MCF 10A (cell line): ENCODE measurements at regions of chr20 and their contacts with region 1.

Region 1: DNA sequence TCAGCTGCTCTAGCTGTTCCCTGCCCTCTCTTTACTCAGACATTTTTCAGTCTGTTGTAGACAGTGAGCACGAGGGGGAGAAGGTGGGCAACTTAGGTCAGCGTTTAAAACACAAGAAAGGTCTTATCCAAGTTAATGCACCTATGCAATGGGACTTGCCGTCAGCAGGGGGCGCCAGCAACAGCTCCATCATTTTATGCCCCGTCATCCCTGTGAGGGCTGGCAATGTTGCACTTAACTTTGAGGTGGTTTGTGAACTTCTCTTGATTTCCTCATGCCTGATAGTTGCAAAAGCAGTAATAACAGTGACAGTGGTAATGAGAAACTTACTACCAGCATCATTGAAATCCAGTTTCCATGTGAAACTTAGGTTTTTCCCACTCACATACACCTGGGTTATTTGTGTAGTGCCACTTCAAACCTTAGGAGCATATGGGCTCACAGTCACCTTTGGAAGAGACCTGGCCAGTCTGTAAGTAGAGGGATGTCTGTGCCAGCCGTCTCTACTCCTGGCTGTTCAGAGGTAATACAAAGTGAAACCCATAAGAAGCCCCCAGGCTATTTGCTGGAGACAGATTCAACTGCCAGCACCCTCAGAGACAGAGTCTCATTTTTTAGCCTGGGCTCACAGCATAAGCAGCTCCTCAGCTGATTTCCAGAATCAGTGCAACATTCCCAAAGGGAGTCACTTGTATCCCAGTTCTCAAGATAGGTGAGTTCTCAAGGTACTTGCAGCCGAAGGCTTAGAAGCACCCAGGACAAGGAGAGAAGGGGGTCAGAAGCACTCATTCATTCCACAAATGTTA is 44.8 kb upstream of the ID1 start:
- DNase-seq: peak; percentile 87
- H3K4me3 Mint-ChIP-seq: peak overlapping the region; percentile 45
- H3K27ac Mint-ChIP-seq: peak overlapping the region; percentile 85
- H3K4me1 Mint-ChIP-seq: peaks cover 30% of the 10 kb centered on the region
- H3K27me3 Mint-ChIP-seq: no peaks in the 10 kb centered on the region
- CTCF ChIP-seq: peak; percentile 94

Region 2: GRCh38 chr20:31537890-31538289 is 22.4 kb before region 1 on chr20:
- CTCF ChIA-PET with region 1: interaction called, 278 read pairs
- POLR2A ChIA-PET with region 1: interaction called, 3 read pairs
- intact Hi-C with region 1: no loop called
- DNase-seq: no peak
- H3K4me3 Mint-ChIP-seq: no peak overlapping the region
- H3K27ac Mint-ChIP-seq: no peak overlapping the region
- H3K4me1 Mint-ChIP-seq: peaks cover 8% of the 10 kb centered on the region
- H3K27me3 Mint-ChIP-seq: no peaks in the 10 kb centered on the region
- CTCF ChIP-seq: no peak

Region 3: GRCh38 chr20:31572701-31573554 is 12.6 kb after region 1 on chr20:
- CTCF ChIA-PET with region 1: interaction called, 220 read pairs
- POLR2A ChIA-PET with region 1: interaction called, 34 read pairs
- intact Hi-C with region 1: no loop called
- DNase-seq: peak; percentile 99
- H3K4me3 Mint-ChIP-seq: peak overlapping the region; percentile 87
- H3K27ac Mint-ChIP-seq: peak overlapping the region; percentile 96
- H3K4me1 Mint-ChIP-seq: peaks cover 27% of the 10 kb centered on the region
- H3K27me3 Mint-ChIP-seq: no peaks in the 10 kb centered on the region
- CTCF ChIP-seq: no peak

Region 4: DNA sequence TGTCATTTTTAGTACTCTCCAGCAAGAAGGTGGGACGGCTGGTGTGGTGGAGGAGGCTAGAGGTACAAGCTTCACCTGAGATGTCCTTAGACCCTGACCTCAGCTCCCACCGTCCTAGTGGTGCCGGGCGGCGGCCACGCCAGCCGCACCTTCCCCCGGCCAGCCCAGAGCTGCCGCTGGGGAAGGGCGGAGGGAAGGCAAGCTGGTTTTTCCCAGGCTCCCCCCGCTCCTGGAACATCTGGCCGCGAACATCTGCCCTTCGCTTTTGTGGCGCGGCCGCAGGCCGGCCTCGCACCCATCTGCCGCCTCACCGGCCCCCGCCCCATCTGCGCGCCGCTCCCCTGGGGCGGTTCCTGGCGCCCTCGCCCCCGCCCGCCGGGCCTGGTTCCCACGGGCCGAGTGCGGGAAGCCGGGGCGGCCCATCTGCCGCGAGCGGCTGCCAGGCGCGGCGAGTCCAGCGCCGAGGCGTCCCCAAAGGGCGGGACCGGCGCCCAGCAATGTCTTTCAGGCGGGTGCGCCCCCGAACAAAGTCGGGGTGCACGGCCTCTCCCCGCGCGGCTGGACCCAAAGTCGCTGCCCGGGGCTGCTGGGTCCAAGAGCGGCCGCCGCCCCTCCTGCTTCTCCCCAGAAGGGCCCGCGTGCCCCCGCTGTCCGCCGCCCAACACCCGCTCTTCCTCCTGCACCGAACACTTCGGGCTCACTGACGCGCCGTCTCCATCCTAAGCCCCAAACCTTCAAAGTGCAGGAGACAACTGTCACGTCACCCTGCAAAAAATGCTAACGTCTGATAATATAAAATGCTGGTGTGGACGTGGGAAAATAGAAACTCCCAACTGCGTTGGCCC is 27.5 kb after region 1 on chr20:
- CTCF ChIA-PET with region 1: interaction called, 44 read pairs
- POLR2A ChIA-PET with region 1: interaction called, 39 read pairs
- intact Hi-C with region 1: no loop called
- DNase-seq: no peak
- H3K4me3 Mint-ChIP-seq: peak overlapping the region; percentile 55
- H3K27ac Mint-ChIP-seq: no peak overlapping the region
- H3K4me1 Mint-ChIP-seq: peaks cover 6% of the 10 kb centered on the region
- H3K27me3 Mint-ChIP-seq: no peaks in the 10 kb centered on the region
- CTCF ChIP-seq: no peak

Region 5: GRCh38 chr20:31630187-31630790 is 70.0 kb after region 1 on chr20:
- CTCF ChIA-PET with region 1: interaction called, 47 read pairs
- POLR2A ChIA-PET with region 1: no interaction called
- intact Hi-C with region 1: no loop called
- DNase-seq: peak; percentile 63
- H3K4me3 Mint-ChIP-seq: no peak overlapping the region
- H3K27ac Mint-ChIP-seq: no peak overlapping the region
- H3K4me1 Mint-ChIP-seq: no peaks in the 10 kb centered on the region
- H3K27me3 Mint-ChIP-seq: no peaks in the 10 kb centered on the region
- CTCF ChIP-seq: no peak

Region 6: DNA sequence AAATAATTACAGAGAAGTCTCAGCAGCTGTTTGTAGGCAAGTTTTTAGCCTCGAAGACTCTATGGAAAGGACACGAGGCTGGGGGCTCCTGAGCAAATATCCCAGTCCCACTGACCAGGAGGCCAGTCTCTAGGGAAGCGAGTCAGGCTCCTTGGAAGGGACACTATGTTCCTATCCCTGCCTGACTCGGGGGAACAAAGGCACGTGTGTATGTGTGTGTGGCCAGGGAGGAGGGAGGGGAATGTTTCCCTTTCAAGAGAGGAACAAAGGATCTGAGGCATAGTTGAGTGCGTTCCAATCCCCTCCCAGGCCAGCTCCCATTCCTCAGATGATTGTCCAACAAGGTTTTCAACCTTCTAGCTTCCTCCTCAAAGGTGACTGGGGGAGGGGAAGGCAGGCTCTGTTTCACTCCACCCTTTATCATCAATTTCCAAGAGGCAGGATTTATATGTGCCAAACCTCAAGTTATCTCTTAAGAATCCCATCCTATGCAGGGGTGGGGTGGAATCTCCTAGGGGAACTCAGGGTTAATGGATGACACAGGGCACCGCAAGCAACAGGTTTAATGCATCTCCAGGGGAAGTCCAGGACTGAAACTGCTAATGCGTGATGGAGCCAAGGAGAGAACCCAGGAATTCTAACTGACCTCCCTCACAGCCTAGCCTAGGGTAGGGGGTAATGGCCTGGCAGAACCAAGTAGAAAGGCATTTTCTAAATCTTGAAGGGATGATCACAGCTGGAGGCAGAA is 152.4 kb after region 1 on chr20:
- CTCF ChIA-PET with region 1: interaction called, 6 read pairs
- POLR2A ChIA-PET with region 1: interaction called, 15 read pairs
- intact Hi-C with region 1: no loop called
- DNase-seq: peak; percentile 92
- H3K4me3 Mint-ChIP-seq: peak overlapping the region; percentile 70
- H3K27ac Mint-ChIP-seq: peak overlapping the region; percentile 96
- H3K4me1 Mint-ChIP-seq: peaks cover 78% of the 10 kb centered on the region
- H3K27me3 Mint-ChIP-seq: no peaks in the 10 kb centered on the region
- CTCF ChIP-seq: no peak

Region 7: DNA sequence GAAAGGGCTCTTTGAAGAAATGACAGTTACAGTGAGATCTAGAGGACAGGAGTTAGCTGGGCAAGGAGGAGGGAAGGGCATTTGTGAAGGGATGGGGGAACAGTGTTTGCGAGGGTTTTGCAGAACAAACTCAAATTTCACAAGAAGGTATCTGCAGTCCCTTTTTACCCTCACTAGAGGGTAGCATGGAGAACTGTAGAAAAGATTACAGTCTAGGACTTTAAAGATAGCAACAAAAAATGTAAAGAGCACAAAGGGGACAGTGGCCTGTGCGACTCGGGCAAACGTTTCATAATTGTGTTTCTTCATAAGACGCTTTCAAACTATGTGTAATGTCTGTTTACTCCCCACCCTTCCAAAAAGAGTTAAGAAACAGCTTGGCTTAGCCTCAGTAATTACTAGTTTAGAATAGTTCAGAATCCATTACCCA is 776.6 kb after region 1 on chr20:
- CTCF ChIA-PET with region 1: no interaction called
- POLR2A ChIA-PET with region 1: no interaction called
- intact Hi-C with region 1: no loop called
- DNase-seq: peak; percentile 51
- H3K4me3 Mint-ChIP-seq: no peak overlapping the region
- H3K27ac Mint-ChIP-seq: no peak overlapping the region
- H3K4me1 Mint-ChIP-seq: peaks cover 12% of the 10 kb centered on the region
- H3K27me3 Mint-ChIP-seq: no peaks in the 10 kb centered on the region
- CTCF ChIP-seq: peak; percentile 36